ENCODE measurements at regions of chr18 and their contacts with region 1.

Region 1: DNA sequence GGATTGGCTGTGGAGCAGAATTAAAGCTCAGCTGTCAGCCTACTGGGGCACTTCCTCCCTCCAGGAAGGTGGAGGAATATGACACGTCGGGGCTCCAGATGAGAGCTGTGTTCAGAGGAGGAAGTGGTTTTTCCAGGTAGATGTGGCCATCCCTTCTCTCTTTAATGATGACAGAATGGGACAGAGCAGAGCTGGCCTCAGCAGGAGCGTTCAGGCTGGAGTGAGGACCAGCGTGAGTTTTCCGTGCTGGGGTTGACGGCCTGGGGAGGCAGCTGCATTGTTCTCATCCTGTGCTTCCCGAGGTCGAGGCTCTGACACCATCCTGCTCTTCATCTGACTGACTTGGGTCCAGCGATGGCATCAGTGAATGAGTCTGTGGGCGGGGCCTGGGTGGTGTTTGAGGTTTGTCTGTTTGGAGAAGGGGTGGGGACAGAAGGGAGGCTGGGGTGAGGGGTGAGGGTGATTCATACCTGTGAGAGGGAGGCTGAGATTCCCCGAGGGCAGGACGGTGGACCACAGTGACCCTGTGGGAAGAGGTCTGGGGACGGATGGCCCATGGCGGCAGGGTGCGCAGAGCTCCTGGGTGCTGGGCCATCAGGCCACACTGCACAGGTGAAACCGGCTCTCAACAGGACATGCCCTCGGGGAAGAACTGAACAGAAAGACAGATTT is 207.0 kb downstream of the LDLRAD4 start:
- DNase-seq: no peak
- ATAC-seq: no peak

Region 2: DNA sequence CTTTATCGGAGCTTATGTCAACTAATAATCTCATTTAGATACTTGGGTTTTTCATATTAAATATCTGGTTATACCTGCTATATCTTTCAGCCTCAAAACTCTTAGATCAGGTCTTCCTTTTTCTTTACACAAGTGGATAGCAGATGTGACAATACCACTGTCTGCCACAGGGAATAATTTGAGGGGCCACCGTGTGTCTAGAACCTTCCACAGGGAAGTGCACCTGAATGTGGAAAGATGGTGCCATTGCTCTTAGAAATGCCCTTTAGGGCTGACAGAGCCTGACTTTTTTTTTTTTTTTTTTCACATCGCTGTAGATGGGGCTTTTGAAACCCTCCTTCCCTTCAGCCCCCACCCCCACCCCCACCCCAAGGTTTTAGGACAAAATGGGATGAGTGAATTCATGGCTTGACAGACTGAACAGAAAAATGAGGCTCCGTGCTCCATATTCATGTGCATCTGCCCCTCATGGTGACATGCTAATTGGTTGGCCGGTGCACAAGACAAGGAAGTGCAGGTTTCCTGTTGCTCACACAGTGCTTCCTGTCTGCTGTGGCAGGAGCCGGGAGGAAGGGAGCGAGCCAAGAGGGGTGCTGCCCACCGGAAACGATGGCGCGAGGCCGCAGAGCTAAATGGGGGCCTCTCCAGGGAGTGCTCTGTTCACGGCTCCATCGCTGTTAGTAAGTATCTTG is 39.0 kb after region 1 on chr18:
- intact Hi-C with region 1: no loop called
- DNase-seq: peak; percentile 78
- ATAC-seq: peak; percentile 76

Region 3: DNA sequence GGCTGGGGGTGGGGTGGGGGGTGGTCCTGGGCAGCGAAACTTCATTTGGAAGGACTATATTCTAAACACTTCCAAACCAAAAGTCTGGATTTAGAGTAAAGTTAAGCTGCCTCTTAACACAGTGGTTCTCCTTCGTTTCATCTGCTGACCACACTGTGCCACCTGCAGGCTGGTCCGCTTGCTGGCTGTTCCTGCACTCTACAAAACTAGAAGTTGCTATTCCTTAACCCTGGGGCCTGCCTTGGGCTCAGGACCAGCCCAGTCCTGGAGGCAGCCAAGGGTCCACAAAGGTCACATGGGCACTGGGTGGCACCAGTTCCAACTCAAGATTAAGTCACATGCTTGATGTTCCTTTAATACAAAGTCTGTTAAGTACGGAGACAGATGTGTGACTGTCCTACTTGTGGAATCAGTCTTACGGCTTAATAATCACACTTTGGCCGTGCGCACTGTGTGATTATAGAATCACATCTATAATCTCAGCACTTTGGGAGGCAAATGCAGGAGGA is 105.3 kb after region 1 on chr18:
- intact Hi-C with region 1: loop called (anchors 5 kb)
- DNase-seq: peak; percentile 77
- ATAC-seq: peak; percentile 88